ENCODE measurements at regions of chr22 and their contacts with region 1.

Region 1: GRCh38 chr22:18024276-18024947 is at the start of gene MICAL3:
- DNase-seq: peak; percentile 48 to 68
- H3K4me3 ChIP-seq: peak within 1 kb of the TSS; percentile 33 to 63
- H3K27ac ChIP-seq: peak within 1 kb of the TSS; percentile 80 to 88
- H3K4me1 ChIP-seq: peaks cover 0 to 4% of the 10 kb centered on the region in 2 donors
- H3K27me3 ChIP-seq: no peaks in the 10 kb centered on the region
- CTCF ChIP-seq: peak; percentile 38 to 78 (median 74)
- POLR2A ChIP-seq: peak; percentile 55 to 73
- total RNA-seq, gene MICAL3: 13.5 to 167 (median 47.2) TPM

Region 2: DNA sequence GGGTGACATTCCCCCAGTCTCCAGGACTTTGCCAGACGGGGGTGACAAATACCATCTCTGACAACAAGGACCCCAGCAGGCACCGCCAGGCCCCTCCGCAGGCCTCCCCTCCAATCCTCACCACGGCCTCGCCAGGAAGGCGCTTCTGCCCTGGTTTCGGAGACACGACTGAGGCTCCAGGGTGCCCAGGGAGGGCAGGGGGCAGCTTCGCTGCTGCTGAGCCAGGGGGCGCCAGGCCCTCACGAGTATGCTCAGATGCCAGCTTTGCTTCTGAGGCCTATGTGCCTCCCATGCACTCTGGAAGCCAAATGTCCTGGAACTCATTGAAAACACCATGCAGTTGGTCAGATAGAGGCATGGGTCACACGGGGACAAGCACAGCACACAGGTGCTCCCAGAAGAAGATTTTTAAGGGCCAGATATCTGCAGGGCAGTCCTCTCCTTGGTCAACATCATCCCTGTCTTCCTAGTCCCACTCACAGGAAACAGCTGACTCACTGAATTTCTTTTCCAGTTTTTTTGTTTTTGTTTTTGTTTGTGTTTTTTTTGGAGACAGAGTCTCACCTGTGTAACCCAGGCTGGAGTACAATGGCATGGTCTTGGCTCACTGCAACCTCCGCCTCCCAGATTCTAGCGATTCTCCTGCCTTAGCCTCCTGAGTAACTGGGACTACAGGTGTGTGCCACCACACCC is 270.0 kb before region 1 on chr22:
- intact Hi-C with region 1: no loop called
- DNase-seq: no peak
- H3K4me3 ChIP-seq: no peak overlapping the region
- H3K27ac ChIP-seq: no peak overlapping the region
- H3K4me1 ChIP-seq: no peaks in the 10 kb centered on the region
- H3K27me3 ChIP-seq: no peaks in the 10 kb centered on the region
- CTCF ChIP-seq: no peak
- POLR2A ChIP-seq: no peak

Region 3: GRCh38 chr22:18077639-18078328 is 53.4 kb after region 1 on chr22 and contains the start of gene PEX26:
- intact Hi-C with region 1: loop called (anchors 10 kb)
- DNase-seq: peak; percentile 92 to 93
- H3K4me3 ChIP-seq: peak within 1 kb of the TSS; percentile 66 to 75
- H3K27ac ChIP-seq: peak within 1 kb of the TSS; percentile 72 to 82
- H3K4me1 ChIP-seq: peaks cover 7 to 14% of the 10 kb centered on the region in 2 donors
- H3K27me3 ChIP-seq: no peaks in the 10 kb centered on the region
- CTCF ChIP-seq: peak in 1 of 4 experiments; percentile 28
- POLR2A ChIP-seq: peak; percentile 45 to 63
- total RNA-seq, gene PEX26: 28.2 to 36.1 (median 31.2) TPM

Measured in uterus (tissue), 4 donors.